Mammary epithelial cell (primary cell): ENCODE measurements at regions of chr3 and their contacts with region 1.

Region 1: GRCh38 chr3:168839653-168840052 is 743.9 kb upstream of the GOLIM4 start:
- DNase-seq: no peak
- H3K4me3 ChIP-seq: no peak overlapping the region
- H3K27ac ChIP-seq: no peak overlapping the region
- H3K4me1 ChIP-seq: no peaks in the 10 kb centered on the region
- H3K27me3 ChIP-seq: peaks cover 5% of the 10 kb centered on the region
- CTCF ChIP-seq: no peak

Region 2: DNA sequence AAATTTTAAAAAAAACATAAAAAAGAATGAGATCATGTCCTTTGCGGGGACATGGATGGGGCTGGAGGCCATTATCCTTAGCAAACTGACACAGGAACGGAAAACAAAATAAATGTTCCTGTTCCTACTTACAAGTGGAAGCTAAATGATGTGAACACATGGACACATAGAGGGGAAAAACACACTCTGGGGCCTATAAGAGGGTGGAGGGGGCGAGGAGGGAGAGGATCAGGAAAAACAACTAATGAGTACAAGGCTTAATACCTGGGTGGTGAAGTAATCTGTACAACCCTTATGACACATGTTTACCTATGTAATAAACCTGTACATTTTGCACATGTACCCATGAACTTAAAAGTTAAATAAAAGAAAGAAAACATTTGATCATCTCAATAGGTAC is 448.4 kb before region 1 on chr3:
- CTCF ChIA-PET with region 1: no interaction called
- dilution Hi-C with region 1: no loop called
- in situ Hi-C with region 1: no loop called
- intact Hi-C with region 1: no loop called
- DNase-seq: no peak
- H3K4me3 ChIP-seq: no peak overlapping the region
- H3K27ac ChIP-seq: no peak overlapping the region
- H3K4me1 ChIP-seq: no peaks in the 10 kb centered on the region
- H3K27me3 ChIP-seq: peaks cover 2% of the 10 kb centered on the region
- CTCF ChIP-seq: no peak

Region 3: DNA sequence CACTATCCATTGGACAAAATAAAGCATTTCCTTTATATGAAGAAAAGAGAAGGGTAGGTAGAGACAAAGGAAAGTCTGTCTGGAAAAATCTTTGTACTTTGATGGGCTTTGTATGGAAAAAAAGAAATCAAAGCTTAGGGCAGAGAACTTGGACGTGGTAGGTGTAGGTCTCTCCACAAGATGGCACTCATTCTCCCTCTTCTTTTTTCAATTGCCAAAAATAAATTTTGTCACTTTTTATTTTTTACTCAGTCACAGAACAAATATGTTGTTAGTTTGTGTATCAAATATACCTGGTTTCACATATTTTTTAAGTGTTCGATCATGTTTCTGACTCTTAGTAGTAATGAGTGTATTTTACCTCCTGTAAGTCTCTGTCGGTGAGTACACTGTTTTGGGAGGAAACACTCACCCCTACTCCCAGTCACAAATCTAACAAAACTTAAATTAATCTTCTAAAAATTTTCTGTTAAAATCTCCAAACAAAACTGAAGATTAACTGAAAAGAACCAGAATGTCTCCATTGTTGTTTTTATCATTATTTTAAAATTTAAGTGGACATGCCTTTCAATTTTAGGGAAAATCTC is 328.1 kb before region 1 on chr3:
- CTCF ChIA-PET with region 1: interaction called, 3 read pairs
- dilution Hi-C with region 1: no loop called
- in situ Hi-C with region 1: loop called (anchors 5 to 25 kb)
- intact Hi-C with region 1: no loop called
- DNase-seq: no peak
- H3K4me3 ChIP-seq: no peak overlapping the region
- H3K27ac ChIP-seq: no peak overlapping the region
- H3K4me1 ChIP-seq: no peaks in the 10 kb centered on the region
- H3K27me3 ChIP-seq: peaks cover 2% of the 10 kb centered on the region
- CTCF ChIP-seq: peak; percentile 56 to 64

Region 4: GRCh38 chr3:168996622-168997021 is 157.0 kb after region 1 on chr3:
- CTCF ChIA-PET with region 1: no interaction called
- dilution Hi-C with region 1: no loop called
- in situ Hi-C with region 1: no loop called
- intact Hi-C with region 1: no loop called
- DNase-seq: no peak
- H3K4me3 ChIP-seq: no peak overlapping the region
- H3K27ac ChIP-seq: no peak overlapping the region
- H3K4me1 ChIP-seq: no peaks in the 10 kb centered on the region
- H3K27me3 ChIP-seq: no peaks in the 10 kb centered on the region
- CTCF ChIP-seq: no peak